ENCODE measurements at regions of chr7 and their contacts with region 1.

Region 1: GRCh38 chr7:23055582-23056178 is 41.8 kb upstream of the HYCC1 start:
- DNase-seq: peak; percentile 69
- H3K4me3 ChIP-seq: no peak overlapping the region
- H3K27ac ChIP-seq: no peak overlapping the region
- H3K4me1 ChIP-seq: no peaks in the 10 kb centered on the region
- H3K27me3 ChIP-seq: no peaks in the 10 kb centered on the region
- CTCF ChIP-seq: peak; percentile 93

Region 2: GRCh38 chr7:22559829-22560489 is 495.7 kb before region 1 on chr7:
- CTCF ChIA-PET with region 1: interaction called, 3 read pairs
- POLR2A ChIA-PET with region 1: no interaction called
- intact Hi-C with region 1: loop called (anchors 1 kb)
- DNase-seq: peak; percentile 84
- H3K4me3 ChIP-seq: no peak overlapping the region
- H3K27ac ChIP-seq: no peak overlapping the region
- H3K4me1 ChIP-seq: no peaks in the 10 kb centered on the region
- H3K27me3 ChIP-seq: no peaks in the 10 kb centered on the region
- CTCF ChIP-seq: peak; percentile 94

Region 3: GRCh38 chr7:22726345-22727185 is 329.1 kb before region 1 on chr7:
- CTCF ChIA-PET with region 1: no interaction called
- POLR2A ChIA-PET with region 1: no interaction called
- intact Hi-C with region 1: loop called (anchors 2 kb)
- DNase-seq: peak; percentile 76
- H3K4me3 ChIP-seq: peak overlapping the region; percentile 31
- H3K27ac ChIP-seq: no peak overlapping the region
- H3K4me1 ChIP-seq: peaks cover 18% of the 10 kb centered on the region
- H3K27me3 ChIP-seq: no peaks in the 10 kb centered on the region
- CTCF ChIP-seq: peak; percentile 68

Region 4: DNA sequence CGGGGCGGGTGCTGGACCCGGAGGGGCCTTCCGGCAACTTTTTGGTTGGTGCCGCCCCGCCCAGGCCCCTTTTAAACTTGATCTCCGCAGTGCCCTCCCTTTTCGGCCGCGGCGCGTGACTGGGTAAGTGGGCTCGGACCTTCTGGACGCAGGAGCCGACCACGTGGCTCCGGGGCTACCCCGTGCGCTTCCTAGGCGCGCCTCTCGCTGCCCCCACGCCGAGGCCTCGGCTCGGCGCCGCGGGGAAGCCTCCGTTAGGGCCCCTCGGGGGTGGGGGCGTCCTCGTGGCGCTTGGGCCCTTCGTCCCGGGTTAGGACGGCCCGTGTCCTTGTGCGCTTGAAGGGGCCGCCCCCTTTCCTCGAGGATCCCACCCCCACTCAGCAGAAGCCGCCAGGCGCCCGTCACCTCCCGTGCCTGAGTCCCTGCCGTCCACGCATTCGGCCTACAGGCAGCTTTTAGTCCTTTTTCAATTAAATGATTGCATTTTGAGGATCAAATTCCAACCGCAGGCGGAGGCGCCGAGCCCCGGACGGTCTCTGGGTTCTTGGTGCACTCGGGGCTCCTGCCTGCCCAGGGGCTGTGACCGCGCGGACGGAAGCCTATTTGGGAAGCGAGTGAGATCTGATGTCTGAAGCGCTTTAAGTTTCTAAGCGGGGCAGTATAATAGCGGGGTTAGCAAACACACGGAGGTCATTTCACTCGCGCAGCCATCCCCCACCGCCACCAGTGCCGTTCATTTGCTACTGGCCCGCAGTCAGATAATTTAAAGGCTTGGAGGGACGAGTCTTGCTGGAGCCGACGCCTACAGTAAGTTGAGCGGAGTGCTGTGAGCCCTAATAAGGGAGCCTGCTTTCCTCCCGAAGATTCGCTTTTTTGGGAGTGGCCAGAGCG is 201.3 kb before region 1 on chr7:
- CTCF ChIA-PET with region 1: no interaction called
- POLR2A ChIA-PET with region 1: no interaction called
- intact Hi-C with region 1: loop called (anchors 2 kb)
- DNase-seq: peak; percentile 88
- H3K4me3 ChIP-seq: peak overlapping the region; percentile 75
- H3K27ac ChIP-seq: peak overlapping the region; percentile 91
- H3K4me1 ChIP-seq: peaks cover 25% of the 10 kb centered on the region
- H3K27me3 ChIP-seq: no peaks in the 10 kb centered on the region
- CTCF ChIP-seq: no peak; the same call in 1 of the 2 replicates

Region 5: GRCh38 chr7:22885797-22886261 is 169.9 kb before region 1 on chr7:
- CTCF ChIA-PET with region 1: no interaction called
- POLR2A ChIA-PET with region 1: no interaction called
- intact Hi-C with region 1: loop called (anchors 10 kb)
- DNase-seq: peak; percentile 57
- H3K4me3 ChIP-seq: no peak overlapping the region
- H3K27ac ChIP-seq: no peak overlapping the region
- H3K4me1 ChIP-seq: peaks cover 12% of the 10 kb centered on the region
- H3K27me3 ChIP-seq: no peaks in the 10 kb centered on the region
- CTCF ChIP-seq: no peak

Region 6: DNA sequence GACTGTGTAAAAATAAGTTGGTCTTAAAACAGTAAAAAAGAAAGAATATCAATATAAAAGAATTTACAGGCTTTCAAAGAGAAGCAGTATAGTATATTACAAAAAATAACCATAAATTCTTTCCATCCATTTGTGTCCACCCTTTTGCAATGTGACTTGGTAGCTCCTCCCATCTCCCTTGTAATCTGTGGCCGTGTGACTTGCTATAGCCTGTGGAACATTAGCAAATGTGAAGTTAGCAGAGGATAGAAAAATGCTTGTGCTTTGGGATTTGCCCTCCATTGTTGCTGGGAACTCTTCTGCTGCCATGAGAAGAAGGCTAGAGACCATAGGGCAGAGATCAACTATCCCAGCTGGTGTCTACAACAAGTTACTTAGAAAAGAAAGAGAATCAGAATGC is 80.1 kb after region 1 on chr7:
- CTCF ChIA-PET with region 1: no interaction called
- POLR2A ChIA-PET with region 1: no interaction called
- intact Hi-C with region 1: no loop called
- DNase-seq: no peak
- H3K4me3 ChIP-seq: no peak overlapping the region
- H3K27ac ChIP-seq: no peak overlapping the region
- H3K4me1 ChIP-seq: no peaks in the 10 kb centered on the region
- H3K27me3 ChIP-seq: no peaks in the 10 kb centered on the region
- CTCF ChIP-seq: no peak

Region 7: DNA sequence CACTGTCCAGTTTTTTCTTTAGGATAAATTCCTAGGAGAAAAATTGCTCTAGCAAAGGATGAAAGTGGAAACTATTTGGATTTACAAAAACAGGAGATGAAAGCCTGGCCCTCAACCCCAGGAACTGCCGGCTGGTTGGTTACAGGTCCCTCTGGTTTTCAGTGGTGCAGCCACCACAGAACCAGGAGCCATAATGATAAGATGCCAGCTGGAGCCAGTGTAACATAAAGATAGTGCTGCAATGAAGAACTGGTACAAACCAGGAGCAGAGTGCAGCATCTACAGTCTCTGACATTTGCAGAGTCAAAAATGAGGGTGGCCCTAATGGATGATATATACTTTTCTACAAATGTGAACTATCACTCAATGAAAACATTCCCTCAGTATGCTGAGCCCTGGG is 105.8 kb after region 1 on chr7:
- CTCF ChIA-PET with region 1: no interaction called
- POLR2A ChIA-PET with region 1: no interaction called
- intact Hi-C with region 1: no loop called
- DNase-seq: no peak
- H3K4me3 ChIP-seq: no peak overlapping the region
- H3K27ac ChIP-seq: no peak overlapping the region
- H3K4me1 ChIP-seq: no peaks in the 10 kb centered on the region
- H3K27me3 ChIP-seq: no peaks in the 10 kb centered on the region
- CTCF ChIP-seq: no peak

Region 8: GRCh38 chr7:23531794-23532489 is 476.3 kb after region 1 on chr7 and contains the start of gene TRA2A:
- CTCF ChIA-PET with region 1: no interaction called
- POLR2A ChIA-PET with region 1: no interaction called
- intact Hi-C with region 1: no loop called
- DNase-seq: peak; percentile 97
- H3K4me3 ChIP-seq: peak within 1 kb of the TSS; percentile 80
- H3K27ac ChIP-seq: peak within 1 kb of the TSS; percentile 99
- H3K4me1 ChIP-seq: peaks cover 31% of the 10 kb centered on the region
- H3K27me3 ChIP-seq: no peaks in the 10 kb centered on the region
- CTCF ChIP-seq: no peak
- total RNA-seq, gene TRA2A: 114 and 116 TPM in 2 replicates

Measured in A673 (cell line).